CD8-positive, alpha-beta T cell (primary cell): ENCODE measurements at regions of chr6 and their contacts with region 1.

Region 1: GRCh38 chr6:167524261-167525111 is 199.6 kb downstream of the TTLL2 start:
- DNase-seq: no peak
- ATAC-seq: no peak
- H3K4me3 ChIP-seq: no peak overlapping the region
- H3K4me3 Mint-ChIP-seq: no peak overlapping the region
- H3K27ac ChIP-seq: no peak overlapping the region
- H3K27ac Mint-ChIP-seq: no peak overlapping the region
- H3K4me1 ChIP-seq: no peaks in the 10 kb centered on the region
- H3K4me1 Mint-ChIP-seq: no peaks in the 10 kb centered on the region
- H3K27me3 ChIP-seq: no peaks in the 10 kb centered on the region
- H3K27me3 Mint-ChIP-seq: peaks cover 16% of the 10 kb centered on the region
- CTCF ChIP-seq: no peak

Region 2: DNA sequence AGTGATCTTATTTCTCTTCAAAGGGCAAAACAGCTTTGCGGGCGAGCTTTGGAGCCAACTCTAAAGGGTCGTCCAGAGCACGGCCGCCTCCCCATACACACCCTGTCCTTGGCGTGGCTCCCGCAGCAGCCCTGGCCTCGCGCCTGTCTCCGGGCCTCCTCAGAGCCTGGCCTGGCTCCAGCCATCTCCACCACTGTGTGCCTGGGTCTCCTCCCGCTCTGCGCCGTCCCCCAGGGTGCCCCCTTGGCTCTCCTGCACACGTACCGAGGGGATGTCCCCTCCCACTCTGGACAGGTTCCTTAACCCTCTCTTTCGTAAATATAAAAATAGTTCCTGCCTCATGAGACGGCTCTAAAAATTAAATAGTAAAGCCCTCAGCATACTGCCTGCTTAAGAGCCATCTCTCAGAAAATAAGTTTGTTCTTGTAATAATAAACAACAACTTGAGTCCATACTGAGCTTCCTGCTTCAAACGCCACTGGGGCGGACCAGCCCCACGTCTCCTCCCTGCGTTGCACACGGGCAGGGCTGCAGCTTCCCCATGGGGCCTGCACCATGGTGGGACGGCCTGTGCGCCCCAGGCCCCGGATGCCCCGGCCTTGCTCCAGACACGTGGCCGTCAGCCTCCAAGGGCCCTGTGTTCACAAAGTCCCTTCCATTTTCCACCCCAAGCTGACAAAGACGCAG is 26.6 kb after region 1 on chr6:
- CTCF ChIA-PET with region 1: no interaction called
- POLR2A ChIA-PET with region 1: no interaction called
- intact Hi-C with region 1: loop called in 1 of 2 experiments (anchors 1 kb)
- DNase-seq: no peak
- ATAC-seq: no peak
- H3K4me3 ChIP-seq: no peak overlapping the region
- H3K4me3 Mint-ChIP-seq: no peak overlapping the region
- H3K27ac ChIP-seq: no peak overlapping the region
- H3K27ac Mint-ChIP-seq: no peak overlapping the region
- H3K4me1 ChIP-seq: no peaks in the 10 kb centered on the region
- H3K4me1 Mint-ChIP-seq: no peaks in the 10 kb centered on the region
- H3K27me3 ChIP-seq: no peaks in the 10 kb centered on the region
- H3K27me3 Mint-ChIP-seq: no peaks in the 10 kb centered on the region
- CTCF ChIP-seq: no peak